ENCODE measurements at regions of chr11 and their contacts with region 1.

Region 1: DNA sequence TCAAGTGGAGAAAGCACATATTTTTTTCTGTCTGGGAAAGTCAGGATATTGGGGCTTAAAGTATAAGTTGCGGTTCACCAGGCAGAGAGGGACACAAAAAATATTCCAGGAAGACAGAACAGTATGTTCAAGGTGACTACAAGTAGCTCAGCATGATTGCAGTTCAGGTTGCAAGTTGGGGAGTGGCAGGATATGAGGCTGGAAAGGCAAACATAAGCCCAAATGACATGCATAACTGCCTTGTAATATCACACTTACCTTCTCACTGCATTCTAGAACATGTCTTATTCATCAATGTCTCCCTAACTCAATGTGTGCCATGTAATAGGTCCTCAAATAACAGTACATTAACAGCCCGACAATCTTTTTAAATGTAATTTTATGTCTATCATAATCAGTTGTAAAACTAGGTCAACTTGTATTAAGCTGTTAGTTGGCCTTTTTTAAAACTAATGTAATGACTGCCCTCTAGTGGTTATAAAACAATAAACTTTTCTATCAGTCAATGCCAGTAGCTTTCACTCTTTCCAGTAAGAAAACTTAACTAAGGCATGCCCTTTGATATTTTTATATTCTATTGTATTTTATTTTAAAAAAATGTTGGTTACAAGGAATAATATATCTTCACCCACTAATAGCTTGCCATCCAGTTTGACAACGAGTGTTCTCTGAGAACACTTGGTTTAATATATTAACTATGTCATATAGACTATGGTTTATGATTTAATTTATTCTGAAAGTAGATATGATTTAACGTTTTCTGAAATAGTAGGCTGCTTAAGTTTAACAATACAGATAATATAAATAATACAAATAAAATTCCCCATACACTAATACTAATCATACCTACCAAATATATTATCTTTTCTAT is 39.4 kb upstream of the CFAP300 start:
- DNase-seq: no peak
- H3K4me3 ChIP-seq: no peak overlapping the region
- H3K27ac ChIP-seq: no peak overlapping the region
- H3K4me1 ChIP-seq: peaks cover 0 to 6% (median 1%) of the 10 kb centered on the region in 6 donors
- H3K27me3 ChIP-seq: peaks cover 0 to 11% (median 0%) of the 10 kb centered on the region in 7 donors
- CTCF ChIP-seq: peak; percentile 15 to 70 (median 50)
- POLR2A ChIP-seq: no peak

Region 2: DNA sequence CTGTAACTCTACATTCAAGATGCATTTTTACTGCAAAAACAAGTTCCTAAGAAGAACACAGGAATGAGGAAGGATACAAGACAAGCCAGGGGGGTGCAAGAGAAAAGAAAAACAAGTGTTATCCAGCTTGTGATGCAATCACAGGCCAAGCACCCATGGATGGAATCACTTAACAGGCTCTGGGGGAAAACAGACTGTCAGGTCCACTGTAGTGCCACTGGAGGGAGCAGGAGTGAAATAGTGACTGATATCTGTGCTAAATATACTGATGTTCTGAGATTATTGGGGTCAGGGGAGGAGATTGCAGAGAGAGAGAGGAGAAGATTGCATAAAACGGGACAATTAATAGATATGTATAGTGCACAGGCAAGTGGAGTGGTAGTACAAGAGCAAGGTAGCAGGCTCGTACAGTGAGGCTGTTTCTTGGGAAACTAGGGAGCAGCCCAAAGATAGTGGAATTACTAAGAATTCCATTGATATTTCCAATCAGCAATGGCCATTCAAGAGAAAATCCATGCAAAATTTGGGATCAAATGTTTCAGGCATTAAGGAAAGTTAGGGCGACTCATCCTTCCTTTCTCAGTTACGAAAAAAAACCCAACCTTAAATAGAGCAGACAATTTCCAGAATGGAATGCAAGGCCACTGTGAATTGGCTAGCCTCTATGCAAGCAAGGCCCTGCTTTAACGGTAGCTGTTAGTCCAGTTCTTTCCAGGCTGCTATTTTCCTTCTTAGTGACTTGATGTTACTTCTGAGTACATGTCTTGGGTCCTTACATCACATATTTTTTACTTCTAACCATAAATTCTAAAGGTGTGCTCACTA is 145.2 kb before region 1 on chr11:
- intact Hi-C with region 1: loop called (anchors 2 kb)
- DNase-seq: no peak
- H3K4me3 ChIP-seq: no peak overlapping the region
- H3K27ac ChIP-seq: no peak overlapping the region
- H3K4me1 ChIP-seq: peaks cover 0 to 4% (median 0%) of the 10 kb centered on the region in 6 donors
- H3K27me3 ChIP-seq: no peaks in the 10 kb centered on the region
- CTCF ChIP-seq: no peak
- POLR2A ChIP-seq: no peak

Region 3: GRCh38 chr11:101960216-101960615 is 47.6 kb before region 1 on chr11:
- intact Hi-C with region 1: no loop called
- DNase-seq: no peak
- H3K4me3 ChIP-seq: no peak overlapping the region
- H3K27ac ChIP-seq: no peak overlapping the region
- H3K4me1 ChIP-seq: no peaks in the 10 kb centered on the region
- H3K27me3 ChIP-seq: no peaks in the 10 kb centered on the region
- CTCF ChIP-seq: no peak
- POLR2A ChIP-seq: no peak